IMR-90 (cell line): ENCODE measurements at regions of chr14 and their contacts with region 1.

Region 1: GRCh38 chr14:71355324-71356201 is 448.3 kb downstream of the PCNX1 start:
- DNase-seq: peak; percentile 68
- ATAC-seq: peak; percentile 67
- H3K4me3 ChIP-seq: no peak overlapping the region
- H3K27ac ChIP-seq: peak overlapping the region; percentile 65; the same call in 1 of the 2 replicates
- H3K4me1 ChIP-seq: peaks cover 17% of the 10 kb centered on the region
- H3K27me3 ChIP-seq: no peaks in the 10 kb centered on the region
- CTCF ChIP-seq: no peak
- POLR2A ChIP-seq: no peak
- RAD21 ChIP-seq: no peak

Region 2: GRCh38 chr14:71414631-71415403 is 59.3 kb after region 1 on chr14:
- CTCF ChIA-PET with region 1: no interaction called
- POLR2A ChIA-PET with region 1: no interaction called
- dilution Hi-C with region 1: no loop called
- in situ Hi-C with region 1: no loop called
- intact Hi-C with region 1: loop called (anchors 5 kb)
- DNase-seq: peak; percentile 71
- ATAC-seq: peak; percentile 73
- H3K4me3 ChIP-seq: no peak overlapping the region
- H3K27ac ChIP-seq: peak overlapping the region; percentile 81
- H3K4me1 ChIP-seq: peaks cover 16% of the 10 kb centered on the region
- H3K27me3 ChIP-seq: no peaks in the 10 kb centered on the region
- CTCF ChIP-seq: no peak
- POLR2A ChIP-seq: no peak
- RAD21 ChIP-seq: no peak